ENCODE measurements at regions of chr10 and their contacts with region 1.

Region 1: GRCh38 chr10:60348982-60349381 is 40.7 kb downstream of the ANK3 start:
- DNase-seq: no peak
- H3K4me3 Mint-ChIP-seq: no peak overlapping the region
- H3K27ac Mint-ChIP-seq: no peak overlapping the region
- H3K4me1 Mint-ChIP-seq: no peaks in the 10 kb centered on the region
- H3K27me3 Mint-ChIP-seq: peaks cover 2% of the 10 kb centered on the region

Region 2: DNA sequence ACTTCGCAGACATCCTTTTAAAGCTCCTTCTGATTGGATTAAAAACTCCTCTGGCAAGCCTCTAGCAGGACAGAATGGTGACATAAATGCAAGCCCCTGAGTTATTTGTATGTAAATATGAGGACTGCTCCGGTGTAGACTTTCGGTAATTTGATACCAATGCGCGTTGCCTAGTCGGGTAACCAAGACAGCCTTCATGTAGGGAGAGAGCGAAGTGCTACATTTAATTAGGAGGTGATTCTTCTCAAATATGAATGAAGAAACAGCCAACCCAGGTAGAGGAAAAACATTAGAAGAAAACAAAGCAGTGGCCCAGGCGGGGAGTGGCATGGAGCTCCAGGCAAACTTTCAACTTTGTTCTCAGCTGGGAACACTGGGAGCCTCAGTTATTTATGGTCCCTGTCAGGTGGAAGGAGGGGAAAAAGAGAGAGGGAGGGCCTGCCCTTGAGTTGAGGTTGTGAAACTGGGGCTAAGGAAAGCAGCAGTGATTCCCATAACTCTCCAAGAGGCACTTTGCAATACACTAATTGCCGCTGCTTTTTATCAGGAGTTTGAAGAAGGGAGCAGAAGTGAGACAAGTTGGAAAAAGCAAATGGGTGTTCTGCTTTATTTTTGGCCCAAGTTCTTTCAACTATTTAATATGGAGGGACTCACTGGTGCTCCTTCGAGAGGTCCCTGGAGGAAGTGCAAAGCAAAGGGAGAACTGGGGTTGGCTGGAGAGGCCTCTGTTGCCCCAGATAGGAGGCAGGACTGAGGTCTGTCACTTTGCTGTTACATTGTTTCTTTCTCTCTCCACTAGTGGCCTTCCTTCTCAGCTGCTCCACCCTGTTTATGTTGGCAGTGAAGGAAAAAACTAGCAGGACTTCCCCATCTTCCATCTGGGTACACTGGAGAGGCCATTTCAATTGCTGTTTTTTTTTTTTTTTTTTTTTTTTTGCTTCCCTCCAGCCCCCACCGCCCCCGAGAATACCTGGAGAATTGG is 208.0 kb before region 1 on chr10:
- intact Hi-C with region 1: loop called (anchors 5 kb)
- DNase-seq: no peak
- H3K4me3 Mint-ChIP-seq: no peak overlapping the region
- H3K27ac Mint-ChIP-seq: no peak overlapping the region
- H3K4me1 Mint-ChIP-seq: peaks cover 3% of the 10 kb centered on the region
- H3K27me3 Mint-ChIP-seq: no peaks in the 10 kb centered on the region

Region 3: DNA sequence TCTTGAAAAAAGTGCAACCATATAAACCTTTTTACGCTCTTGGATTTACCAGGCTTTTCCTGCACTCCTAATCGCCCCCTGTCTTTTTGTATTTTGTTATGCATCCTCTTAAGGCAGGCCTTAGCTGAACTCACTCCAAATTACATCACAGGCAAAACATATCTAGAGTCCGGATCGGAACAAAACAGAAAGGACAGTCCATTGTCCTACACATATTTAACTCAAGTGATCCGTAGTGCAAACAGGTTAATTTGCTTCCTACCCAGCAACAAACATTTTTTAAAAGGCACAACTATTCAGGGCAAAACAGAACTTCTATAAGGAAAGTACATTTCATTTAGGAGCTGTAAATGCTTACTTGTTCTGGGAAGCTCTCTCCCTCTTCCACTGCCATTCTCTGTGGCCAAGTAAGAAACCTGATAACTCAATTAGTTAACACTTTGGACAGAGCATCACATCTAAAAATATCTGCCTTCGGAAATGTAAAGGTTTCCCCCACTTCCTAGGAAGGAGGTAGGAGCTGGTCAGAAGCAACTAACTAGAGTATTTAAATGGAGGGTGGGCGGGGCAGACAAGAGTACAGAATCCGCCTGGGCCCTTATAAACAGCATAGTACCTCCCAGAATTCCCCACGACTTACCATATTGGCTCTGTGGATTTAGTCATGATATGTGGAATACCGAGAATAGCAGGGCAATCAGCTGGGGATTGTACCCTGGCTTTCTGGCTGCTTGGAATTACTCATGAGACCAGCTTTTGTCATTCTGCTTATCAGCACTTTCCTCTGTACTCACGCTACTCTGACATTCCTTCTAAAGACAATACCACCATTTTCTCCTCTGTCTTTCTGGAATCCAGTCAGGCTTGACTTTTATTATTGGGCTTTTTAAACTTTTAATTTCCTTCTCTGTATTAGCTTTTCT is 48.8 kb before region 1 on chr10:
- intact Hi-C with region 1: no loop called
- DNase-seq: no peak
- H3K4me3 Mint-ChIP-seq: no peak overlapping the region
- H3K27ac Mint-ChIP-seq: no peak overlapping the region
- H3K4me1 Mint-ChIP-seq: no peaks in the 10 kb centered on the region
- H3K27me3 Mint-ChIP-seq: no peaks in the 10 kb centered on the region